T-cell (primary cell): ENCODE measurements at regions of chr1 and their contacts with region 1.

Region 1: DNA sequence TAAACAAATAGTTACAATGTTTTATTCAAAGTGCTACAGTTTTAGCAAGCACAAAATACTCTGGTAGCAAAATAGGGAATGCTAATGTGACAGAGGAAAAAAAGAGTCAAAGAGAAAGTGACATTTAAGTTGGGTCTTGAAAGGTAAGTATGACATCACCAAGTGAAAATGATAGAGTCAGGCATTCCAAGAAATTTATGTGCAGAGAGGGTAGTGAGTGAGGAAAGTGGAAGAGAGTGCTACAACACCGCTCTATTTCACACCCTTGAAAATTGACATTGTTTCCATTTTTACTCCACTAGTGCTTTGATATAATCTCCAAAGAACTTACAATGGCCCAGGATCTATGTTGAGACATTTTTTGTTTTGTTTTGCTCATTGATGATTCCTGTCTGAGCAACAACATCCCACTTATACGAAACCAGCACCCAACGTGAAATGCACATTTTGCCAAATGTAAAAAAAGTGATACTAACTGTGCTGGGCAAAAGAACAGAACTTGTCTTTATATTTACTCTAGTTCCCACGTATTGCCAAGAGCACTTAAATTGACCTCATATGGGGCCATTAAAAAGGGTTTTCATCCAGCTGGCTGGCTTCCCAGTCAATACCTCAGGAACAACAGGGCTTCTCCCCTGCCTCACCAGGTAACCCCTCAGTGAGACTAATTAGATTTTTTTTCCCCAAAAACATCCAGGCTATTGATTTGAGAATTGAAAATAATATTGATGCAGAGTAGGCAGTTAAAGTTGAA is 206.3 kb upstream of the NR5A2 start:
- DNase-seq: no peak
- ATAC-seq: no peak
- H3K4me3 ChIP-seq: no peak overlapping the region
- H3K4me3 Mint-ChIP-seq: no peak overlapping the region
- H3K27ac ChIP-seq: no peak overlapping the region
- H3K27ac Mint-ChIP-seq: no peak overlapping the region
- H3K4me1 ChIP-seq: no peaks in the 10 kb centered on the region
- H3K4me1 Mint-ChIP-seq: no peaks in the 10 kb centered on the region
- H3K27me3 ChIP-seq: no peaks in the 10 kb centered on the region
- H3K27me3 Mint-ChIP-seq: peaks cover 10 to 26% of the 10 kb centered on the region in 2 donors

Region 2: GRCh38 chr1:199102239-199102638 is 719.0 kb before region 1 on chr1:
- CTCF ChIA-PET with region 1: no interaction called
- POLR2A ChIA-PET with region 1: no interaction called
- DNase-seq: peak in 1 of 35 experiments; percentile 6
- ATAC-seq: peak in 1 of 4 experiments; percentile 50
- H3K4me3 ChIP-seq: no peak overlapping the region
- H3K4me3 Mint-ChIP-seq: no peak overlapping the region
- H3K27ac ChIP-seq: no peak overlapping the region
- H3K27ac Mint-ChIP-seq: no peak overlapping the region
- H3K4me1 ChIP-seq: no peaks in the 10 kb centered on the region
- H3K4me1 Mint-ChIP-seq: peaks cover 3 to 5% (median 3%) of the 10 kb centered on the region in 3 donors
- H3K27me3 ChIP-seq: peaks cover 0 to under 1% of the 10 kb centered on the region in 2 experiments
- H3K27me3 Mint-ChIP-seq: no peaks in the 10 kb centered on the region

Region 3: GRCh38 chr1:199573047-199573446 is 248.2 kb before region 1 on chr1:
- CTCF ChIA-PET with region 1: no interaction called
- POLR2A ChIA-PET with region 1: no interaction called
- DNase-seq: no peak
- ATAC-seq: no peak
- H3K4me3 ChIP-seq: no peak overlapping the region
- H3K4me3 Mint-ChIP-seq: no peak overlapping the region
- H3K27ac ChIP-seq: no peak overlapping the region
- H3K27ac Mint-ChIP-seq: no peak overlapping the region
- H3K4me1 ChIP-seq: no peaks in the 10 kb centered on the region
- H3K4me1 Mint-ChIP-seq: no peaks in the 10 kb centered on the region
- H3K27me3 ChIP-seq: no peaks in the 10 kb centered on the region
- H3K27me3 Mint-ChIP-seq: peaks cover 8% of the 10 kb centered on the region in 2 donors

Region 4: DNA sequence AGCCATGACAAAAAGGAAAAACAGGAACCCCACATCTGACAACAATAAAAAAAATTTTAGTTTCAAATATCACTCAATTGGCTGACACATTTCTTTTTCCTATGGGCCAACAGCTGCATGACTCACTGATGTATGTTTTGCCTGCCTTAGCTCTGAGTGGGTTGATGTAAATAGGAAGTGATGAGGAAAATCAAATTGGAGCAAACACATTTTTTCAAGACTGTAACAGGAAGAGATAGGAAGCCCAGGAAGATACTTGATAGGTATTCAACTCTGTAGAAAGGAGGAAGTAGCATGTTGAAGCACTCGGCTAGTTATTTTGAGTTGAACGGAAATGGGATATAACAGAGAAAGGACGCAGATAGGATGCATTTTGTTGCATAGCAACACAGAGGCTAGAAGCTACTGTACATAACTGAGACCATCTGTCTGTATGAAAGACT is 38.3 kb after region 1 on chr1:
- CTCF ChIA-PET with region 1: no interaction called
- POLR2A ChIA-PET with region 1: no interaction called
- DNase-seq: peak in 1 of 35 experiments; percentile 1
- ATAC-seq: no peak
- H3K4me3 ChIP-seq: no peak overlapping the region
- H3K4me3 Mint-ChIP-seq: no peak overlapping the region
- H3K27ac ChIP-seq: no peak overlapping the region
- H3K27ac Mint-ChIP-seq: no peak overlapping the region
- H3K4me1 ChIP-seq: peaks cover 0 to 8% of the 10 kb centered on the region in 2 experiments
- H3K4me1 Mint-ChIP-seq: peaks cover 4 to 7% (median 6%) of the 10 kb centered on the region in 3 donors
- H3K27me3 ChIP-seq: peaks cover 0 to 3% of the 10 kb centered on the region in 2 experiments
- H3K27me3 Mint-ChIP-seq: peaks cover 0 to 20% of the 10 kb centered on the region in 2 donors

Region 5: GRCh38 chr1:200610846-200611245 is 789.6 kb after region 1 on chr1:
- CTCF ChIA-PET with region 1: no interaction called
- POLR2A ChIA-PET with region 1: interaction called in 1 of 2 experiments, 16 read pairs
- DNase-seq: no peak
- ATAC-seq: no peak
- H3K4me3 ChIP-seq: no peak overlapping the region
- H3K4me3 Mint-ChIP-seq: no peak overlapping the region
- H3K27ac ChIP-seq: no peak overlapping the region
- H3K27ac Mint-ChIP-seq: no peak overlapping the region
- H3K4me1 ChIP-seq: no peaks in the 10 kb centered on the region
- H3K4me1 Mint-ChIP-seq: no peaks in the 10 kb centered on the region
- H3K27me3 ChIP-seq: no peaks in the 10 kb centered on the region
- H3K27me3 Mint-ChIP-seq: no peaks in the 10 kb centered on the region